ENCODE measurements at regions of chr7 and their contacts with region 1.

Region 1: DNA sequence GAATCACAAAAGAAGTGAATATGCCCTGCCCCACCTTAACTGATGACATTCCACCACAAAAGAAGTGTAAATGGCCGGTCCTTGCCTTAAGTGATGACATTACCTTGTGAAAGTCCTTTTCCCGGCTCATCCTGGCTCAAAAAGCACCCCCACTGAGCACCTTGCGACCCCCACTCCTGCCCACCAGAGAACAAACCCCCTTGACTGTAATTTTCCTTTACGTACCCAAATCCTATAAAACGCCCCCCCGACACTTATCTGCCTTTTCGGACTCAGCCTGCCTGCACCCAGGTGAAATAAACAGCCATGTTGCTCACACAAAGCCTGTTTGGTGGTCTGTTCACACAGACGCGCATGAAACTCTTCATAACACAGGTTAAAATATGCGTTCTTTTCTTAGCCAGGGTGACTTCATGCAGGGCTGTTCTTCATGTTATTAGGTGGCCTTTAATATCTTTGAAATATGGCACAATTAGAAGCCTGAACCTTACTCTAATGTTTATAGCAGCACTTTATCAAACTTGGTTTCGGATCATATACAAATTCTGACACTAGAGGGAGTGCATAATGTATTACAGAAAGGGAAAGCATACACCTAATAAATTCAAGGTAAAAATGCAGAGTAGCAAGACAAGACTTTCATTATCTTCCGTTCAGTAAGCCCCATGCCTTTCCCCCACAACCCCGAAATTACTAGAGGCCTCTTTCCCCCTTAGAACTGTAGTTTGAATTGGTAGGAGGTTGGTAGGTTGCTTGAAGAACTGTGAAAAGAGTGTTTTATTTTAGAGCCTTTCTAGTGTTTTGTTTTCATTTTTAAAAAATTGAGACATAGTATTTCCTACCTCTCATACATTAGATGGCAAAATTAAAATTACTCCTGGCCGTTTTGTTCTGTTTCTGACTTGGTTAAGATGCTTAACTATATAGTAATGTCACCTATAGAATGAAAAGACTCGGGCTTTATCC is 117.9 kb downstream of the NPY start:
- DNase-seq: no peak
- H3K4me3 ChIP-seq: no peak overlapping the region
- H3K4me3 Mint-ChIP-seq: no peak overlapping the region
- H3K27ac ChIP-seq: no peak overlapping the region
- H3K27ac Mint-ChIP-seq: no peak overlapping the region
- H3K4me1 ChIP-seq: no peaks in the 10 kb centered on the region
- H3K4me1 Mint-ChIP-seq: no peaks in the 10 kb centered on the region
- H3K27me3 ChIP-seq: no peaks in the 10 kb centered on the region
- H3K27me3 Mint-ChIP-seq: peaks cover 0 to 6% (median under 1%) of the 10 kb centered on the region in 3 donors
- CTCF ChIP-seq: peak; percentile 16

Region 2: DNA sequence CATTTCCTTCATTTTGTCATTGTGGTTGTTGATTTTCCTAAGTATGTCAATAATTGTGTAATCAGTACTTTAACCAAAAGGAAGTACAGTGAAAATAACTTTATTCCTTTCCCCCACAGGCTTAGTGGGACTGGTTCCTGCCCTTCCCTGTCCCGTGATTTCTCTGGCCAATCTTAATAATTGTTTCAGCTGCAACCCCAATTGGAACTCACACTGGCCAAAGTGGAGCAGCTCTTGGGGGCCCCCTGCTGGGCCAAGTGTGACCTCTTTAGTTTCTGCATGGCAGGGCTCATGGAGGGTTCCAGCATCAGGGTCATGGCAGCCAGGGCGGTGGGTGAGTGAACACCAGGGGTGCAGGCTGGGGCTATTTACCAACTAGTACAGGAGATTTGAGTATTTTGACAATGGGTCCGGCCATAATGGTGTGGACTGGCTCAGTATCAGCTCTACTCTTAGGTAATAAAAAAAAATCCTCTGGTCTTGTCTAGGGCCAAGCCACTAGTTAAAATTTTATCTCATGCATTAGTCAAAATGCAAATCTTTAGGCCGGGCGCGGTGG is 691.4 kb after region 1 on chr7:
- intact Hi-C with region 1: loop called in 1 of 2 experiments (anchors 10 kb)
- DNase-seq: peak; percentile 50 to 72 (median 65)
- H3K4me3 ChIP-seq: no peak overlapping the region
- H3K4me3 Mint-ChIP-seq: no peak overlapping the region
- H3K27ac ChIP-seq: no peak overlapping the region
- H3K27ac Mint-ChIP-seq: no peak overlapping the region
- H3K4me1 ChIP-seq: peaks cover 13% of the 10 kb centered on the region in 2 donors
- H3K4me1 Mint-ChIP-seq: peaks cover 13% of the 10 kb centered on the region
- H3K27me3 ChIP-seq: no peaks in the 10 kb centered on the region
- H3K27me3 Mint-ChIP-seq: peaks cover 1 to 6% (median 3%) of the 10 kb centered on the region in 3 donors
- CTCF ChIP-seq: peak; percentile 69